AG04450 (cell line): ENCODE measurements at regions of chr4 and their contacts with region 1.

Region 1: GRCh38 chr4:150242820-150243458 is 164.7 kb downstream of the DCLK2 start:
- DNase-seq: no peak
- H3K4me3 ChIP-seq: no peak overlapping the region
- H3K27ac ChIP-seq: no peak overlapping the region
- H3K27me3 ChIP-seq: no peaks in the 10 kb centered on the region
- CTCF ChIP-seq: peak; percentile 90

Region 2: GRCh38 chr4:149980941-149981340 is 262.0 kb before region 1 on chr4:
- CTCF ChIA-PET with region 1: interaction called, 54 read pairs
- POLR2A ChIA-PET with region 1: no interaction called
- DNase-seq: no peak
- H3K4me3 ChIP-seq: no peak overlapping the region
- H3K27ac ChIP-seq: no peak overlapping the region
- H3K27me3 ChIP-seq: no peaks in the 10 kb centered on the region
- CTCF ChIP-seq: peak; percentile 87

Region 3: GRCh38 chr4:149999485-150000074 is 243.4 kb before region 1 on chr4:
- CTCF ChIA-PET with region 1: interaction called, 41 read pairs
- POLR2A ChIA-PET with region 1: no interaction called
- DNase-seq: peak; percentile 61
- H3K4me3 ChIP-seq: no peak overlapping the region
- H3K27ac ChIP-seq: no peak overlapping the region
- H3K27me3 ChIP-seq: no peaks in the 10 kb centered on the region
- CTCF ChIP-seq: peak; percentile 87

Region 4: GRCh38 chr4:150209140-150209829 is 33.7 kb before region 1 on chr4:
- CTCF ChIA-PET with region 1: interaction called, 16 read pairs
- POLR2A ChIA-PET with region 1: no interaction called
- DNase-seq: peak; percentile 44
- H3K4me3 ChIP-seq: no peak overlapping the region
- H3K27ac ChIP-seq: no peak overlapping the region
- H3K27me3 ChIP-seq: no peaks in the 10 kb centered on the region
- CTCF ChIP-seq: peak; percentile 71

Region 5: DNA sequence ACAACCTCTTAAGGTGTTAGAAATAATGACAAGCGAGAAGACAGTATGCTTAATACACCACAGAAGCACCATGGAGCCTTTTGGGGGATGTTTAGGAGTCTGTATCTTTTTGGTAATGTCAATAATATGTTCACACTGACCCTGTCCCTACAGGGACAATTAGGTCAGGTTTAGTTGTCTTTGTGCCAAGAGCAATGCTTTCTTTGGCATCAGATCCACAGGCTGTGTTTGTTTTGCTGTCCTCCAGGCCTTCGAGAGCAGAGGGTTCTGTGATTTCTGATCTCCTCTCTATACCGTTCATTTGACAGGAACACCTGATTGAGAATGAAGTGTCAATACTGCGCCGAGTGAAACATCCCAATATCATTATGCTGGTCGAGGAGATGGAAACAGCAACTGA is 10.9 kb before region 1 on chr4:
- CTCF ChIA-PET with region 1: interaction called, 25 read pairs
- POLR2A ChIA-PET with region 1: interaction called, 4 read pairs
- DNase-seq: no peak
- H3K4me3 ChIP-seq: no peak overlapping the region
- H3K27ac ChIP-seq: no peak overlapping the region
- H3K27me3 ChIP-seq: no peaks in the 10 kb centered on the region
- CTCF ChIP-seq: no peak

Region 6: DNA sequence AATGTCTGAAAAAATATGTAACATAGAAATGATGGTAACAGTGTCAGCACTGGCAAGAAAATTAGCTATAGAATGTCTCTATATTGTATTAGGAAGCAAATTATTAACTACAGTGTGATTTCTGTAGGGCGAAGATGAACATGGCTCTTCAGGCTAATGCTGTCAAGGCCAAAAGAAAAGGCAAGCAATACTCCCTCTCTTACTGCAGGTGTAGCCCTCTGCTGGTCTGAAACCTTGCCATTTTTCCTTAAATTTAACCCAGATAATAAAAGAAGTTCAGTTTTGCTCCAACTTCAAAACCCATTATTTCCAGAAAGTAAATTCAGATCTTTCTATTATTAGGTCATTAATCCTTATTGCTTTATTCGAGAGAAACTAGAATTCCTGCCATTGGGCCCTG is 556.3 kb after region 1 on chr4:
- CTCF ChIA-PET with region 1: no interaction called
- POLR2A ChIA-PET with region 1: no interaction called
- DNase-seq: no peak
- H3K4me3 ChIP-seq: no peak overlapping the region
- H3K27ac ChIP-seq: no peak overlapping the region
- H3K27me3 ChIP-seq: no peaks in the 10 kb centered on the region
- CTCF ChIP-seq: peak; percentile 32; the same call in 1 of the 2 replicates

Region 7: DNA sequence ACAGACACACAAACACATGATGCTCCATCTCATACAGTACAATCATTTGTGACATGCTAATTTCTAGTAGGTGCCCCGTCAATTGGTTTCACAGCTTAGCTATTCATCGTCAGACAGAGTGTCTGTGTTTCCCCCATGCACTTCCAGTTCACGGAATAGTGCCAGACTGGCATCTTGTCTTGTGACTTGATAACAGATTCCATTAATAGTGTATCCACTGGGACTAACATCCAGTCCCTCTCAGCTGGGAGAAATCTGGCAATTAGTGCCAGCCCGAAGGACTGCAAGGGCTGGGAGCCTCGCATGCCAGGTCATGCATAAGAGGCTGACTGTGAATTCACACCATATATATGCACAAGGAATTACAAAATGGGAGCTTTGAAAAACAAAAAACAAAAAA is 1538.1 kb after region 1 on chr4:
- CTCF ChIA-PET with region 1: no interaction called
- POLR2A ChIA-PET with region 1: no interaction called
- DNase-seq: no peak
- H3K4me3 ChIP-seq: no peak overlapping the region
- H3K27ac ChIP-seq: no peak overlapping the region
- H3K27me3 ChIP-seq: peaks cover 6% of the 10 kb centered on the region
- CTCF ChIP-seq: no peak